ENCODE measurements at regions of chr1 and their contacts with region 1.

Region 1: GRCh38 chr1:204162231-204163074 is 3.7 kb downstream of the REN start:
- DNase-seq: peak; percentile 83
- CTCF ChIP-seq: peak; percentile 97

Region 2: DNA sequence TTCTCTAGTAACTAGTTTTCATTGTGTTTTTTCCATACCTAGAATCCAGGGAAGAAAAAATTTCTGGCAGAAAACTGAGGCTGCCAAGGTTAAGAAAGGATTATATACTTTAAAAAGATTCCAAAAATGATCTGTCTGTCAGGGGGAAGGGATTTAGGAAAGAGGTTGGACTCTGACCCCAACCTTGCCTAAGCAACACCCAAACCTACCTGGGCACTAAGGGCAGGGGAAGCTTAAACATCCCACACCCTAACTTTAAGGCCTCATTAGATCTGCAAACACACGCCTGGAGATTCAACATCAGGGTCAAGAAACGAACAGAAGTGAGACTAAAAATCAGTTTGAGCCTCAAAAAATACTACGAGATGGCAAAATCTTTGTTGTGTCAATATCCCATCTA is 1373.7 kb before region 1 on chr1:
- in situ Hi-C with region 1: no loop called
- DNase-seq: no peak
- CTCF ChIP-seq: no peak

Region 3: DNA sequence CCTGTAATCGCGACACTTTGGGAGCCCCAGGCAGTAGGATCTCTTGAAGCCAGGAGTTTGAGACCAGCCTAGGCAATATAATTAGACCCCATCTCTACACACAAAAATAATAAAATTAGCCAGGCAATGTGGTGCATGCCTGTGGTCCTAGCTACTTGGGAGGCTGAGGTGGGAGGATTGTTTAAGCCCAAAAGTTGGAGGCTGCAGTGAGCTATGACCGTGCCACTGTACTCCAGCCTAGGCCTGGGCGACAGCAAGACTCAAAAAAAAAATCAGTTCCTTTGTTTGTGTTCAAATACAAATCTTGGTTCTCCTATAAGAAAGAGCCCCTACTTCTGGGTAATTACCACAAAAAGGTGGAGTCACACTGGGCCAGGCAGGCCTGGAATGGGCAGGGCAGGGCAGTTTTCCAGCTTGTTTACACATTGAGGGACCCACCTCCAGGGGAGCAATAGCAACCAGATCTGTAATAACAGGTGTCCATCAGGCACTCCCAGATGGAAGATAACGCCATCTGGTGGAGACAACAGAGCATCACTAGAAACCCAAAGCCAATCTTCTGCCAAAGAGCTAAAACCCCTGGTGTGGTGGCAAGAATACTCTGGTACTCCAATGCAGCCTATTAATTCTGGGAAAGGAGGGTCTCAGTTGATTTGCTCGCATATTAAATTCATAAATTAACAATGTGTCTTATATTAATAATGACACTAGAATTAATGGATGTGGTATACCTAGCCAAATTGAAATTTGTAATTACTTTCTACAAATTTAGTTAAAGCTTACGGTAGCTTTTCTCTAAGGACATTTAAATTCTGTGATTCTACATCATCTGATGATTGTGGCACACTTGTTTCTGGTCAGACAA is 236.0 kb after region 1 on chr1:
- in situ Hi-C with region 1: loop called (anchors 25 kb)
- DNase-seq: peak; percentile 77
- CTCF ChIP-seq: peak; percentile 81